ENCODE measurements at regions of chr2 and their contacts with region 1.

Region 1: DNA sequence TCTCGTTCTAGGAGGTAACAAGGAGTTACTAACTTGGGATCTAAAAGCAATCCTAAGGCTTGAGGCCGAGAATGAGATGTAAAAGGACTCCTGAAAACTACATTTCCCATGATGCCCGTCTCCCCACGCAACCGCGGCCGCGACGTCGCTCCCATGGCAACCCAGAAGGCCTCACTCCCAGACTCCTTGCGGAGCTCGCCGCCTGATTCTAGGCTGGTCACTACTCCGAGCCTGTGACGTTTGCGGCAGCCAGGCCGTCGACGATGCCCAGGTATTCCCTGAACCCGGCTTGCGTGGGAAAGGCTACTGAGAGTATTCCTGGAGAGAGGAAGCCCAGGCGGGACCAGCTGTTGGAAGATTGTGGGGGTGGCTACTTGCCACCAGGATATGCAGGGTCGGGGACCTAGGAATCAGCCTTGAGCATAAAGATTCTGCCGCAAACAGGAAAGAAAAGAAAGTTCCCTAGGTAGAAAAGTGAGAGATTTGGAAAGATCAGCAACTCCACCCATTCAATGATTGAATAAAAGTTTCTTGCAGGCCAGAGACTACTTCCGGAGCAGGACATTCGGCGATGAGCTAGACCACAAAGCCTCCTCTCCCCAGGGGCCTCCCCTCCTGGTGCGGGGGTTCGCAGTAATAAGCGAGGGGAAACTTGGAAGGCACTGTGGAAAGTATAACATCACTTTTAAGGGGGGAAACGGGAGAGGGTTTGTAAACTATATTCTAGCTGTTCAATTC is at the start of gene DYNC2LI1:
- DNase-seq: peak; percentile 83
- ATAC-seq: peak; percentile 99
- H3K4me3 ChIP-seq: peak within 1 kb of the TSS; percentile 76 to 89 (median 82)
- H3K4me3 Mint-ChIP-seq: peak within 1 kb of the TSS; percentile 98
- H3K27ac ChIP-seq: peak within 1 kb of the TSS in 1 of 2 donors; percentile 69
- H3K27ac Mint-ChIP-seq: peak within 1 kb of the TSS; percentile 82
- H3K4me1 ChIP-seq: peaks cover 0 to 11% of the 10 kb centered on the region in 2 donors
- H3K4me1 Mint-ChIP-seq: peaks cover 13% of the 10 kb centered on the region
- H3K27me3 ChIP-seq: no peaks in the 10 kb centered on the region
- H3K27me3 Mint-ChIP-seq: peaks cover 16% of the 10 kb centered on the region
- CTCF ChIP-seq: no peak
- total RNA-seq, gene DYNC2LI1: 11.4 and 12.7 TPM in 2 replicates

Region 2: GRCh38 chr2:43995733-43996533 is 221.9 kb after region 1 on chr2 and contains the start of gene LRPPRC:
- CTCF ChIA-PET with region 1: no interaction called
- POLR2A ChIA-PET with region 1: no interaction called
- intact Hi-C with region 1: loop called (anchors 5 kb)
- DNase-seq: peak; percentile 96
- ATAC-seq: peak; percentile 94
- H3K4me3 ChIP-seq: peak within 1 kb of the TSS; percentile 75 to 98 (median 79)
- H3K4me3 Mint-ChIP-seq: peak within 1 kb of the TSS; percentile 90
- H3K27ac ChIP-seq: peak within 1 kb of the TSS; percentile 69 to 89
- H3K27ac Mint-ChIP-seq: peak within 1 kb of the TSS; percentile 96
- H3K4me1 ChIP-seq: peaks cover 24 to 28% of the 10 kb centered on the region in 2 donors
- H3K4me1 Mint-ChIP-seq: peaks cover 47% of the 10 kb centered on the region
- H3K27me3 ChIP-seq: no peaks in the 10 kb centered on the region
- H3K27me3 Mint-ChIP-seq: peaks cover 5% of the 10 kb centered on the region
- CTCF ChIP-seq: no peak
- total RNA-seq, gene LRPPRC: 75.6 and 77.3 TPM in 2 replicates